A549 (cell line): ENCODE measurements at regions of chr7 and their contacts with region 1.

Region 1: DNA sequence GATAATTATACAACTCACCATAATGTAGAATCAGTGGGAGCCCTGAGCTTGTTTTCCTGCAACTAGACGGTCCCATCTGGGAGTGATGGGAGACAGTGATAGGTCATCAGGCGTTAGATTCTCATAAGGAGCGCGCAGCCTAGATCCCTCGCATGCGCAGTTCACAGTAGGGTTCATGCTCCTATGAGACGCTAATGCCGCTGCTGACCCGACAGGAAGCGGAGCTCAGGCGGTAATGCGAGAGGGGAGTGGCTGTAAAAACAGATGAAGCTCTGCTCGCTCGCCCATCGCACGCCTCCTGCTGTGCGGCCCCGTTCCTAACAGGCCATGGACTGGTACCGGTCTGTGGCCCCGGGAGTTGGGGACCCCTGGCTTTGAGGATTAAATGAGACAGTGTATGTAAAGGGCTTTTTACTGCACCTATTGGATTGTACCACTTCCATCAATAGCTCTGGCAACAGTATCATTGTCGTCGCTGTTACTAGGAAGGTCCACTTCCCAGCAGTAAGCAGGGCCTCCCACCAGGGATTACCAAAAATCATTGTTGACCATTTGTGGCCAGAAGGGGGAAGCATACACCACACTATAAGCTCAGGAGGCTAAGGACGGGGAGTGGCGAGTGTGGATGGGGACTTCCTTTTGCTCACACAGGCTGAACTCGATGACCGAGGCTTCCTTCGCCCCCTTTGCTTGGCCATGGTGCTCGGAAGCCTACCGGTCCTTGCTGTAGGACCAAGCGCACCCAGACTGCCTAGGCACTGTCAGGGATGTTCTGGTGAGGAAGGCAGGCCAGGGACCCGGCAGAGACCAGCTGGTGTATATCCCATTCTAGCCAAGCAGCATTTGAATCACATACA is 26.4 kb downstream of the AKR1B1 start:
- DNase-seq: peak; percentile 99 to 100
- ATAC-seq: peak; percentile 92 to 96
- H3K4me3 ChIP-seq: peak overlapping the region; percentile 46
- H3K27ac ChIP-seq: peak overlapping the region; percentile 79 to 88
- H3K4me1 ChIP-seq: peaks cover 30% of the 10 kb centered on the region
- CTCF ChIP-seq: peak; percentile 100
- EP300 ChIP-seq: no peak
- POLR2A ChIP-seq: no peak; the same call in 1 of the 2 replicates
- RAD21 ChIP-seq: peak; percentile 100

Region 2: DNA sequence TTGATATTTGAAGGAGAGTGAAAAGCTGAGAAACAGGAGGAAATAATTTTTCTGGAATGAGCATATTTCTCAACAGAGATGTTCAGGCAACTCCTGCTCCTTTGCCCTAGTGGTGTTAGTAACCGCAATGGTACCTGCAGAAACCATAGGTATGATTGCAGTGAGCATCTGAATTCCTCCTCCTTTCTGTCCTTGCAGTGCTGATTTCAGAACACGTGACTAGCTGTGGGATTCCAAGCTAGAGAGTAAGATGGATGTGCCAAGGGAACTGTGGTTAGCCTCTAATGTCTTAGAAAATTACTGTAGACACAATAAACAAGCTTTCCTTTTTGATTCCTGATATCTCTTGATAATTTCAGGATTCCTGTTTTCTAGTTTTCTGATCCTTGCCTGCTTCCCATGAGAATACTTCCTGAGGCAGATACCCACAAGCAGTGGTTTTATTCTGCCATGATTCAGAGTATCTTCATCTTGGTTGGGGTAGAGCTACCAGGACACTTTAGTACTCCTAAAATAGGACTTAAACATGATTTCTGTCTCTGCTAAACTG is 277.9 kb before region 1 on chr7:
- CTCF ChIA-PET with region 1: no interaction called
- POLR2A ChIA-PET with region 1: no interaction called
- DNase-seq: no peak
- ATAC-seq: 0 out of 6 replicates have a peak, but pooled peaks of 1 of the 2 experiments have one; percentile 34
- H3K4me3 ChIP-seq: no peak overlapping the region
- H3K27ac ChIP-seq: no peak overlapping the region
- H3K4me1 ChIP-seq: no peaks in the 10 kb centered on the region; the same call in 2 of the 3 replicates
- CTCF ChIP-seq: no peak
- EP300 ChIP-seq: no peak
- POLR2A ChIP-seq: no peak
- RAD21 ChIP-seq: no peak

Region 3: DNA sequence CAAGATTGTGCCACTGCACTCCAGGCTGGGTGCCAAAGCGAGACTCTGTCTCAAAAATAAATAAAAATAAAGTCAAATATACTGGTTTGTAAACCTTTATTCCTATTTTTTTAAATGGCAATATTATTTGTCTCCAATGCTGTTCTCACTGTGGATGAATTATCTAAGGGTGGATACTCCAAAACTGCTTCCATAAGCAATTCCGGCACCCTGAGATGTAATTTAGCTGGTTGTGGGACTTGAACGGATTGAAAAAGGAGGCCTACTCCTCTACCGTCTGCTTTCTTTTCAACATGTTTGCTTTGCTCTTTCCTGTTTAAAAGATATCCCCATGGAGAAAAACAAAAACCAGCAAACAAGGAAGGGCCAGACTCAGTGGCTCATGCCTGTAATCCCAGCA is 170.2 kb before region 1 on chr7:
- CTCF ChIA-PET with region 1: no interaction called
- POLR2A ChIA-PET with region 1: no interaction called
- DNase-seq: no peak
- ATAC-seq: no peak
- H3K4me3 ChIP-seq: no peak overlapping the region
- H3K27ac ChIP-seq: no peak overlapping the region
- H3K4me1 ChIP-seq: no peaks in the 10 kb centered on the region
- CTCF ChIP-seq: no peak
- EP300 ChIP-seq: no peak
- POLR2A ChIP-seq: no peak
- RAD21 ChIP-seq: no peak

Region 4: GRCh38 chr7:134368851-134369552 is 63.5 kb before region 1 on chr7:
- CTCF ChIA-PET with region 1: interaction called, 17 read pairs
- POLR2A ChIA-PET with region 1: interaction called, 7 read pairs
- DNase-seq: peak; percentile 81 to 97
- ATAC-seq: peak; percentile 45 to 81
- H3K4me3 ChIP-seq: no peak overlapping the region
- H3K27ac ChIP-seq: peak overlapping the region; percentile 89 to 90
- H3K4me1 ChIP-seq: peaks cover 61% of the 10 kb centered on the region
- CTCF ChIP-seq: no peak
- EP300 ChIP-seq: peak; percentile 96 to 97
- POLR2A ChIP-seq: no peak
- RAD21 ChIP-seq: peak in 1 of 2 experiments; percentile 69; a peak in 4 of 5 replicates

Region 5: DNA sequence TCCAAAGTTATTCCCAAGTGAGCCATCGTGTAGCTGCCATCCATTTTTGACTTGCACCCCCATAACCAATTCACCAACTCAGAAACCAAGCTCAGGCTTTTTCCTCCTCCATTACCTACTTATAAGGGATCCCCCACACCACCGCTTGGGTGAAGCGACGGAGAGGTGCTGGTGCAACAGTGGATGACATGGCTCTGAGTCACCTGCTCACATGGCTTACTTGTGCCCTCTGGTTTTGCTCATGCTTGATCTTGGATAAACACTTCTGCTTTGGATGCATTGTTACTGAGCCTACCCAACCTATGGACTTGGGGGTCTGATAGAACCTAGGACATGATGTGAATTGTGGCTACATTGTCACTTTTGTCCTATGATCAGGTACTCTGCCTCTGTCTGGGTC is 38.3 kb after region 1 on chr7:
- CTCF ChIA-PET with region 1: interaction called, 167 read pairs
- POLR2A ChIA-PET with region 1: no interaction called
- DNase-seq: peak; percentile 70 to 74
- ATAC-seq: peak; percentile 45 to 66; a peak in 3 of 6 replicates
- H3K4me3 ChIP-seq: no peak overlapping the region
- H3K27ac ChIP-seq: peak overlapping the region; percentile 12 to 55; a peak in 5 of 6 replicates
- H3K4me1 ChIP-seq: peaks cover 41% of the 10 kb centered on the region
- CTCF ChIP-seq: no peak
- EP300 ChIP-seq: no peak
- POLR2A ChIP-seq: no peak
- RAD21 ChIP-seq: no peak

Region 6: DNA sequence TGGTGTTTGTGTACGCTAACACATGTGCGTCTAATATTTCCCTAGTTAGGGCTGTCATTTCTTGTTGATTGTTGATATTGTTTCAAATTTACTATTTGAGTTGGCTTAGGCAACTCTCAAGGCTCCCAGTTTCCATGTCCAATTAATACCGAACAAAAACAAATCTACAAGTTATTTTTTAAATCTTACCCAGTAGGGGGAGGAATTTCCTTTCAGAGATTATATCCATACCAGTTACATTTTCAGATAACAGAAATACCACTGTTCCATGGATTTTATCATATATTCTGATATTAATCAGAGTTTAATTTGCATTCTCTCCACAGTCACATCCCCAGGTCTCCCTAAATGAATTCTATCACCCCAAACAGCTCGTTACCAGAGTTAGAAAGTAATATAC is 87.6 kb after region 1 on chr7:
- CTCF ChIA-PET with region 1: interaction called, 566 read pairs
- POLR2A ChIA-PET with region 1: interaction called, 6 read pairs
- DNase-seq: peak in 1 of 2 experiments; percentile 67
- ATAC-seq: peak; percentile 59 to 67; a peak in 5 of 6 replicates
- H3K4me3 ChIP-seq: peak overlapping the region; percentile 32
- H3K27ac ChIP-seq: peak overlapping the region; percentile 76 to 81
- H3K4me1 ChIP-seq: peaks cover 65% of the 10 kb centered on the region
- CTCF ChIP-seq: peak; percentile 76
- EP300 ChIP-seq: no peak
- POLR2A ChIP-seq: no peak
- RAD21 ChIP-seq: peak; percentile 70 to 78; a peak in 4 of 5 replicates

Region 7: DNA sequence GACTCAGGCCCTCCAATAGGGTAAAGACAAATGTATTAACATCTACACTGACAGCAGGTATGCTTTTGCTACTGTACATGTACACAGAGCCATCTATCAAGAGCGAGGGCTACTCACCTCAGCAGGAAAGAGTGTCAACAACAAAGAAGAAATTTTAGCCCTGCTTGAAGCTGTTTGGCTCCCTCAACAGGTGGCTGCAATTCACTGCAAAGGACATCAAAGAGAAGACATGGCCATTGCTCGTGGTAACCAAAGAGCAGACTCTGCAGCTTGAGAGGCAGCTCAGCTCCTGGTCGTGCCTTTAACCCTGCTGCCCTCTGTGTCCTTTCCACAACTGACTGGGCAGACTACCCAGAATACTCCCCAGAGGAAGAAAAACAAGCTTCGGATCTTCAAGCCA is 121.5 kb after region 1 on chr7:
- CTCF ChIA-PET with region 1: interaction called, 54 read pairs
- POLR2A ChIA-PET with region 1: interaction called, 5 read pairs
- DNase-seq: peak in 1 of 2 experiments; percentile 62
- ATAC-seq: peak in 1 of 2 experiments; percentile 9; a peak in 2 of 6 replicates
- H3K4me3 ChIP-seq: no peak overlapping the region
- H3K27ac ChIP-seq: peak overlapping the region in 1 of 2 experiments; percentile 86; a peak in 4 of 6 replicates
- H3K4me1 ChIP-seq: peaks cover 13% of the 10 kb centered on the region
- CTCF ChIP-seq: peak; percentile 17; the same call in 1 of the 3 replicates
- EP300 ChIP-seq: no peak
- POLR2A ChIP-seq: no peak
- RAD21 ChIP-seq: peak; percentile 27 to 54; a peak in 2 of 5 replicates

Region 8: GRCh38 chr7:134632937-134633540 is 200.5 kb after region 1 on chr7:
- CTCF ChIA-PET with region 1: interaction called, 16 read pairs
- POLR2A ChIA-PET with region 1: no interaction called
- DNase-seq: peak; percentile 67 to 73
- ATAC-seq: peak; percentile 78 to 94; a peak in 5 of 6 replicates
- H3K4me3 ChIP-seq: no peak overlapping the region
- H3K27ac ChIP-seq: no peak overlapping the region
- H3K4me1 ChIP-seq: no peaks in the 10 kb centered on the region
- CTCF ChIP-seq: peak; percentile 89
- EP300 ChIP-seq: no peak
- POLR2A ChIP-seq: no peak
- RAD21 ChIP-seq: peak; percentile 89 to 95

Region 9: DNA sequence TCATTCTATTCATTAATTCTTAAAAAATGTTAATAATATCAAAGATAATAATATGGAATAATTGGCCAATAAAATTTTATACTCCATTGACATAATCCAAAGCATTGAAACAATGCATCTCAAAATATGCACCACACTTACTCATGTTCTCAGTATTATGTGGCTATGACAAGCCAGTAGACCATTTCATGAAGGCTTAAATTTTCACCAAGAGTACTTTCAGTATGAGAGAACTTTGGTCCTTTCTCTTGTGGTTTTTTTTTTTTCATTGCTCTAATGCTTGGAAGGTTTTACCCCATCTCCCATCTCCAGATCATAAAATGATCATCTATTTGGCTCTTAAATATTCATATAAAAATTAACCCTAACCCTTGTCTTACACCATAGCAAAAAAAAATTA is 669.8 kb after region 1 on chr7:
- CTCF ChIA-PET with region 1: no interaction called
- POLR2A ChIA-PET with region 1: no interaction called
- DNase-seq: no peak
- ATAC-seq: no peak
- H3K4me3 ChIP-seq: no peak overlapping the region
- H3K27ac ChIP-seq: no peak overlapping the region
- H3K4me1 ChIP-seq: no peaks in the 10 kb centered on the region
- CTCF ChIP-seq: no peak
- EP300 ChIP-seq: no peak
- POLR2A ChIP-seq: no peak
- RAD21 ChIP-seq: no peak